Right ventricle myocardium superior (tissue), 1 donor: ENCODE measurements at regions of chr5 and their contacts with region 1.

Region 1: DNA sequence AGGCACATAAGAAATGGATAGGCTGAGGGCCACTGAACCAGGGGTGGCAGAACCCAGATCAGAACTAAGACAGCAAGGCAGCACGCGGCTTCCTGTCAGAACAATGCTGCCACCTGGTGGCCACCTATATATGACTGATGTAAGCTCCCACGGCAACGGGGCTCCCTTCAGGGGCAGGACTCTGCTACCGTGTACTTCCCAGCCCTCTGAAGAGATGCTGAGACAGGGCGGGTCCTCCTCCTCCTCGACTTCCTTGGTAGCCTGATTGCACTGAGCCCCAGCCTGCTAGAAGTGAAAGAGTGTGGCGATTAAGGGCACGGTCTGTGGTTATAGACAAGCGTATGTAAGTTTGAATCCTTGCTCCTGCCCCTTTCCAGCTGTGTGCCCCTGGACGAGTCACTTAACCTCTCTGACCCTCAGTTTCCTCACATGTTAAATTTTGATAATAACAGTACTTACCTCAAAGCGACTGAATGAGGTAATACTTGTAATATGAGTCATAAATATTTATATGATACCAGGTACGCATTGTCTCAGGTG is 13.3 kb downstream of the RPS14 start:
- DNase-seq: peak; percentile 90
- ATAC-seq: peak; percentile 88

Region 2: GRCh38 chr5:150001678-150002493 is 434.3 kb before region 1 on chr5:
- intact Hi-C with region 1: no loop called
- DNase-seq: no peak
- ATAC-seq: peak; percentile 49

Region 3: GRCh38 chr5:150129813-150130492 is 306.3 kb before region 1 on chr5:
- intact Hi-C with region 1: loop called (anchors 10 kb)
- DNase-seq: peak; percentile 85
- ATAC-seq: peak; percentile 87

Region 4: GRCh38 chr5:150161242-150162141 is 274.7 kb before region 1 on chr5:
- intact Hi-C with region 1: loop called (anchors 10 kb)
- DNase-seq: peak; percentile 91
- ATAC-seq: peak; percentile 71

Region 5: DNA sequence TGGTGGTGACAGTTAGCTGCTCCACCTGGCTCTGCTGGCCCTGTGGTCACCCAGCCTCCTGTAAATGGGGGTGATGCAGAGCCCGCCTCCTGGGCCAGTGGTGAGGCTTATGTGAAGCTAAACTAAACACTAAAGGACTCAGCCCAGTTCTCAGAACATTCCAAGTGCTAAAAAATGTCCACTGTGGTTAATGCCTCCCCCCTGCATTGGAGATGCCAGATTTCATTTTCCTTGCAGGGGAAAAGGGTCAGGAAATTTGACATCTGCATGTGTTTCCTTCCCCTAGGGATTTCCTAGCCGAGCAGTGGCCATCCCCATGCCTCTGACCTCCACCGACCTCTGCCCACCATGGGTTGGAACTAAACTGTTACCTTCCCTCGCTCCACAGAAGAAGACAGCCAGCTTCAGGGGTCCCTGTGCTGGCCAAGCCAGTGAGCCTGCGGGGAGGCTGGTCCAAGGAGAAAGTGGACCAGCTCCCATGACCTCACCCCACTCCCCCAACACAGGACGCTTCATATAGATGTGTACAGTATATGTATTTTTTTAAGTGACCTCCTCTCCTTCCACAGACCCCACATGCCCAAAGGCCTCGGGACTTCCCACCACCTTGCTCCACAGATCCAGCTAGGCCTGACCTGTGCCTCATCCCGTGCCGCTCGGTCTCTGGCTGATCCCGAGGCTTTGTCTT is 36.5 kb before region 1 on chr5:
- intact Hi-C with region 1: loop called (anchors 5 kb)
- DNase-seq: no peak
- ATAC-seq: no peak

Region 6: DNA sequence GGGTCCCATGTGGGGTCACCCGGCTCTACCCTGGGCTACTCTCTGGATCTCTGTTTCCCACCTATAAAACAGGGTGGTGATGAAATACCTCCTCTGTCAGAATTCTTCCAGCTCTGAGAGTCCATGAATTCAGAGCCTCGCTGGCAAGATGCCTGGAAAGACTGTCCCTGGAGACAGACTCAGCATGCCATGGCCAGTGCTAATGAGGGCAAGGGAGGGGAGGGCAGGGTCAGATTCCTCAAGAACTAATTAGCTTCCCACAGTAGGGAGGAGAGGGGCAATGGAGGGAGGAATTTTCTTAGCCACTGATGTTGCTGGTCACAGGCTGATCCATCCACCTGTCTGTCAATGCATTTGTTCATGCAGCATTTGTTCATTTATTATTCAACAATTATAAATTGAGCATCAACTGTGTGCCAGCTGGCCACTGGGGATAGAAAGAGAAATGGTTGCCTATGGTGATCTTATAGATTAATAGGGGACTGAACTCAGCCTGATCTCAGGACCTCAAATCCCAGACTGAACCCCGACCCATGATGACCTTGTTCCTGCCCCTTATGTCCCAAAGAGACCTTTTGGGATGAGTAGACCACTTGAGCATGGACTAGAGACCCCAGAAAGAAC is 209.0 kb after region 1 on chr5:
- intact Hi-C with region 1: no loop called
- DNase-seq: peak; percentile 87
- ATAC-seq: no peak